GM10248 (cell line): ENCODE measurements at regions of chr18 and their contacts with region 1.

Region 1: GRCh38 chr18:11937874-11938478 is 29.9 kb upstream of the MPPE1 start:
- DNase-seq: peak; percentile 80
- CTCF ChIP-seq: peak; percentile 58

Region 2: GRCh38 chr18:11849279-11849678 is 88.7 kb before region 1 on chr18:
- CTCF ChIA-PET with region 1: interaction called, 11 read pairs
- POLR2A ChIA-PET with region 1: no interaction called
- DNase-seq: no peak
- CTCF ChIP-seq: no peak

Region 3: GRCh38 chr18:11872479-11873136 is 65.4 kb before region 1 on chr18:
- CTCF ChIA-PET with region 1: no interaction called
- POLR2A ChIA-PET with region 1: no interaction called
- DNase-seq: peak; percentile 45
- CTCF ChIP-seq: peak; percentile 37

Region 4: DNA sequence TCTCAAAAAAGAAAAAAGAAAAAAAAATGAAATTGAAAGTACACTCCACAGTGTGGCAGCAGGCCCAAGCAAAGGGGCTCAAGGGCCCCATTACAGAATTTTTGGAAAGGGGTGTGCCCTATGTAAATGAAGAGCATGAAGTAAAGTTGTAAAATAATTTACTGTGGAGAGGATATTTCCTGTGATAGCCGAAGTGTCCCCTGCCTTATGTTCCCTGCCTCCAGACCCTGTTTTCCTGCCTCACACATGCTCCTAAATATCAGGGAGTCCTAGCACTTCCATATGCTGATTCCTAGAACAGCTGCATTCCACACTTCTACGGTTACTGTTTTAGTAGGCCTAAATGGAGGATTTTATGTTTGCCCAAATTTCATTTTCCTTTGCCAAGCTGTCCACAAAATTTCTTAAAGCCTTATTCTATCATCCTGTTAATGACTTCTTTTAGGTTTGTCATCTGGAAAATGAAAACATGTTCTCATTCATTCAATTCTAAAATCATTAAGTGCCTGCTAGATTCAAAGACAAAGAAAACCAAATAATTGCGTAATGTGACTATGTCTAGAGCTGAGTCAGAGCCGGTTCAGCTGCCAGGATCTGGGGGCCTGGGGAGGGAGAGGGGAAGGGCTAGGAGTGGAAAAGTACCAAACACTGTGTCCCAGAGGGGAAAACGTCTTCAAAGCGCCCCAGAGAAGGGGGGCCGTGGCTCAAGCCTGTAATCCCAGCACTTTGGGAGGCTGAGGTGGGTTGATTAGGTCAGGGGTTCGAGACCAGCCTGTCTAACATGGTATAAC is 17.5 kb after region 1 on chr18:
- CTCF ChIA-PET with region 1: interaction called, 51 read pairs
- POLR2A ChIA-PET with region 1: no interaction called
- DNase-seq: no peak
- CTCF ChIP-seq: no peak

Region 5: DNA sequence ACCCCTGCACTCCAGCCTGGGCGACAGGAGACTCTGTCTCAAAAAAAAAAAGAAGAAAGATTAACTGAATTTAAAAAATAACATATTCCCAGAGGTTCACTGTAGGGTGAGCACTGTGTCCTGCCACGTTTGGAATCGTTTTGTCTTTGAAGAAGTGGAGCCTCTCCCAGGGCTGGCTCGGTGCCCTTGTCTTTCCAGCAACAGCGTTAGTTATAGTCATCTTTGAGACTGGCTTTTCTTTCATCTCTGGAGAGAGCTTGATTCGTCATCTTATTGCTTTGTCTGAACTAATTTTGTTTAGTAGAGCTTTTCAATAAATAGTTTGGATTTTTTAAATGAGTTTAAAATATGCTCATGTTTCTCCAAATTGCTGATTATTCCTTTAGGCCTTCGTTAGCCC is 93.9 kb after region 1 on chr18:
- CTCF ChIA-PET with region 1: interaction called, 91 read pairs
- POLR2A ChIA-PET with region 1: no interaction called
- DNase-seq: no peak
- CTCF ChIP-seq: no peak